ENCODE measurements at regions of chr2 and their contacts with region 1.

Region 1: DNA sequence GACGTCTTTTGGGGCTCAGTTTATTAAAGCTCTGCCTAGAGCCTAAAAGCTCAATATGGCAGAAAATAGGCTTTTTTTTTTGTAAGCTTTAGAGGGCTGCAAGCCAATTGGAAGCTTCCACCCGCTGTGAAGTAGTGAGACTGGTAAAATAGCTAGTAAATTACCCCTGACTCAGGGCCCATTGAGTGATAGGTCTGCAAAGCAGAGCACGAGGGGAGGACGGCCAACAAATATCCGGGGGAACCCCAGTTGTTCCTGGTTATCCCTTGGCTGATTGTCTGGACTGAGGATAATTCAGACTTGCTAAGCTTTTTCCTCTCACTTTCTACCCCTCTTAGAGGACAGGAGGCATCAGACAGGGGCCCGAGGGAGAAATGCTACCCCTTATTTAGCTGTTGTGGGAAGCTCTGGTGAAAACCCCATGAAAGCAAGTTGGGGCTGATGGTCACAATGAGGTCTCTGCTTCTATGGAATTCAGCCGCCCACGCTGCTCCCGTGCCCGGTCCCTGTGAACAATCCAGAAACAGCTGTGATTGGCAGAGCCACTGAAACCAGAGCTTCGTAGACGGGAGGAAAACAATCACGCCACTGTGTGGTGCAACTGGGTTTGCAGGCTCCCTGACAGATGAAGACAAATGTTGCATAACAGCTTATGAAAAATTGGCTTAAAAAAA is 141.9 kb upstream of the LGALSL start:
- H3K4me3 Mint-ChIP-seq: no peak overlapping the region
- H3K27ac Mint-ChIP-seq: peak overlapping the region; percentile 25
- H3K4me1 Mint-ChIP-seq: peaks cover 24% of the 10 kb centered on the region
- H3K27me3 Mint-ChIP-seq: peaks cover 3% of the 10 kb centered on the region

Region 2: DNA sequence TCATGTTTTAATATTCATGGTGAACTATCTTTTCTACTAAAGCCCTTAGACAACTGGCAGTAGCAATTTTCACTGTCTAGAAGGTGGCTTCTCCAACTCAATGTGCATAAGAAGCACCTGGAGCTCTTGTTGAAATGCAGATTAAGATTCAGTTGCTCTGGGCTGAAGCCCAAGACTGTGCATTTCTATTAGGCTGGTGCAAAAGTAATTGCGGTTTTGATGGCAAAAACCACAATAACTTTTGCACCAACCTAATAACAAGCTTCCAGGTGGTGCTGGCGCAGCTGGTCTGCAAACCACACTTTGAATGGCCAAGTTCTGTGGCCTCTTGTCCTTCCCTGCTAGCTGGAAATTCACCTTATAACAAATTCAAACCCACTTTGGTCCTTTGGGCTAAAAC is 266.1 kb before region 1 on chr2:
- intact Hi-C with region 1: loop called (anchors 5 kb)
- H3K4me3 Mint-ChIP-seq: no peak overlapping the region
- H3K27ac Mint-ChIP-seq: no peak overlapping the region
- H3K4me1 Mint-ChIP-seq: peaks cover 4% of the 10 kb centered on the region
- H3K27me3 Mint-ChIP-seq: no peaks in the 10 kb centered on the region

Region 3: DNA sequence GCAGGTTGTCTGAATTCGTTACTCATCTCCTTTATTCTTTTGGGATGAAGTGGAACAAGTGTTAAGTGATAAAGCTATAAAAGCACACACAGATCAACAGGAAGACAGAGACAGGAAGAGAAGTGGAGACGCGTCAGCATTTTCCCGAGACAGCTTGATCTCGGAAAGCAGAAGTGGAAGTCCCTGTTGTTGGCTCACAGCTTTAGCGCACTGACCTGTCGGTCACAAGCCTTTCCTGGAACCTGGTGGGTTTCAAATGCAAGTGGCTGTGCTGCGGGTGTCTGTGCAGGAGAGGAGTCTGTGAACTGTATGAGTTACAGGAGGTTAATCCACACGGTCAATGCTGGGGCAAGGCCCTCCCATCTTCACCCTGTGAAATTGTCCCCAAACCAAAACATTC is 51.3 kb before region 1 on chr2:
- intact Hi-C with region 1: loop called (anchors 10 kb)
- H3K4me3 Mint-ChIP-seq: peak overlapping the region; percentile 50
- H3K27ac Mint-ChIP-seq: peak overlapping the region; percentile 84
- H3K4me1 Mint-ChIP-seq: peaks cover 45% of the 10 kb centered on the region
- H3K27me3 Mint-ChIP-seq: no peaks in the 10 kb centered on the region

Measured in dendritic cell treated with granulocyte-macrophage colony-stimulating factor and Interleukin-4, amounts not matched to agents 40 ng/mL and 50 ng/mL, for 4 days (primary cell).